K562 (cell line): ENCODE measurements at regions of chr1 and their contacts with region 1.

Region 1: DNA sequence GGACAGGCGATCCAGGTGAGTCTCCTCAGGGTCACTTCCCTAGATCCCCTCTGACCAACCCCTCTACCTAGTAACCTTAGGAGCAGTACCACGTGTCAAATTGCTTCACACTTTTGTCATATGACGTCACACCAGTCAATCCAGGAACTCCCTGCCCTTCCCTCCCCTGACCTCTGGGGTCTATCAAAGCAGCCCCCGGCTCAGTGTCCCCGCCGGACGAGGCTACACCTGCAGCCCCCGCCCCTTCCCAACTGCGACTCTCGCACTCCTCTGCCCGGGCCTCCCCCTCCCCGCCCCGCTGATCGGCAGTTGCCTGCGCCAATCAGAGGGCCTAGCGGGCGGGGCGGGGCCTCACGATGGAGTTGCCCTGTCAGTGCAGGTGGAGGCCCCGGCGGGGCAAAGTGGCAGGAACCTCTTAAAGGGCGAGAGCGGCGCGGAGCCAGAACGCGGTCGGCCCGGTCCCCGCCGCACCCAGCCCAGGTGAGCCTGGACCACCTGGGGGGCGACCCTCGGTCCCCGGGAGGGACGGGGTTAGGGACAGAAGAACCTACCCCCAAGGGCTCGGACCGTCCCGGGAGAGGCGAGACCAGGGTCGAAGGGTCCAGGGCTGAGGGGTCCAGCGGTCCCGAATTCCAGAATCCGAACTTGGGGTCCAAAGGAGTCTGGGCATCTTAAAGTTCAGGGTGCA is 27.5 kb upstream of the EPB41 start:
- DNase-seq: peak; percentile 96 to 100 (median 99)
- ATAC-seq: peak; percentile 74
- H3K4me3 ChIP-seq: peak overlapping the region; percentile 81
- H3K27ac ChIP-seq: peak overlapping the region; percentile 87
- H3K4me1 ChIP-seq: peaks cover 63 to 87% of the 10 kb centered on the region in 2 experiments
- H3K27me3 ChIP-seq: no peaks in the 10 kb centered on the region
- CTCF ChIP-seq: no peak
- EP300 ChIP-seq: no peak
- POLR2A ChIP-seq: peak; percentile 82
- RAD21 ChIP-seq: no peak

Region 2: DNA sequence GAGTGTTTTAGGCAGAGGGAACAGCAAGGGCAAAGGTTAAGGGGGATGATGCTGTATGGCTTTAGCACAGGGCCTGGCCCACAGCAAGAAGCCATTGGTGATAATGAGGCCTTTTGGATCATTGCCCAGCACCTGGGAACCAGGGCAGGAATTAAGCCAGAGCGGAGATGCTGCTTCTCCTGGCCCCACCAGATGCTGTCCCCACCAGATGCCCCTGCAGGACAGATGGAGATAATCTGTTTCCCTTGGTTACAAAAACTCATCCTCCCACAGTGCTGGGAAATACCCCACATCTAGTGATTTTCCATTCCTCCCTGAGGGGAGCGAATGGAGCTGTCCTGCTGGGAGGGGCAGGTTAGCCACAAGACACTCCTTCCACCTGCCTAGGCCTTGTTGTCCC is 56.1 kb before region 1 on chr1:
- CTCF ChIA-PET with region 1: no interaction called
- POLR2A ChIA-PET with region 1: no interaction called
- in situ Hi-C with region 1: no loop called
- intact Hi-C with region 1: no loop called
- DNase-seq: peak in 1 of 4 experiments; percentile 28
- ATAC-seq: peak; percentile 49
- H3K4me3 ChIP-seq: no peak overlapping the region
- H3K27ac ChIP-seq: no peak overlapping the region
- H3K4me1 ChIP-seq: no peaks in the 10 kb centered on the region
- H3K27me3 ChIP-seq: peaks cover 16 to 49% of the 10 kb centered on the region in 2 experiments
- CTCF ChIP-seq: no peak
- EP300 ChIP-seq: no peak
- POLR2A ChIP-seq: no peak
- RAD21 ChIP-seq: no peak

Region 3: DNA sequence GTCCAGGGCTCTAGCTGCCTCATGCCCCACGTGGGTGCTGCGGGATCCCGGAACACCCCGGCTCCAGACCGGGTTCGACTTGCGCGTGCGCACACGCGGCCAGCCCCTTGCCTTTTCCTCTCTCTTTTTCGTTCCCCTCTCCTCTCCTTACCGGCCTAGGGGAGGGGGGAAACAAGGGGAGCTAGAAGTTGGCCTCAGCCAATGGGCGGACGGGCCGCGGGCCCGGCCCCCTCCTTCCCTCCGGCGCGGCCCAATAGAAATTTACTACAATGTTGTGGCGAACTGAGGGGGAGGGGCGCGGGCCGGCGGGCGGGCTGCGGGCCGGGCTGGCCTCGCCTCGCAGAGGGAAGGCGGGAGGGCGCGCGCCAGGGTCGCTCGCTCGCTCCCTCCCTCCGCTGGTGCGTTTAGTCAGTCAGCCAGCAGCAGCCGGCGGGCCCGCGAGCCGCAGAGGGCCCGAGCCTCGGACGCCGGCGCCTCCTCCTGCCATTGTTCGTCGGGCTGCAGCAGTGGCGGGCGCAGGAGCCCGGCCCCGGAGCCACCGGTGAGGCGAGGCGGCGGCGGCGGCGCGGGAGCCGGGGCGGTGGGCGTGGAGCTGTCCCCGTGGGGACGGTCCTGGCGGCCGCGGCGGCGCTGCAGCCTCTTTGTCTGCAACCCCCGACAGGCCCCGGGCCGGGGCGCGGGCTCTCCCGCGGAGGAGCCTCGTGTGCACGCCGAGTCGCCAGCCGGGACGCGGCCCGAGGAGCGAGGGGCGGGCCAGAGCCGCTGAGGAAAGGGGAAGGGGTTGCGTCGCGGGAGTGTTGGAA is 27.6 kb after region 1 on chr1 and contains the start of gene EPB41:
- CTCF ChIA-PET with region 1: no interaction called
- POLR2A ChIA-PET with region 1: interaction called, 10 read pairs
- in situ Hi-C with region 1: no loop called
- intact Hi-C with region 1: loop called (anchors 2 kb)
- DNase-seq: peak; percentile 98 to 99 (median 99)
- ATAC-seq: peak; percentile 94
- H3K4me3 ChIP-seq: peak within 1 kb of the TSS; percentile 59
- H3K27ac ChIP-seq: peak within 1 kb of the TSS; percentile 80
- H3K4me1 ChIP-seq: peaks cover 39 to 42% of the 10 kb centered on the region in 2 experiments
- H3K27me3 ChIP-seq: no peaks in the 10 kb centered on the region
- CTCF ChIP-seq: no peak
- EP300 ChIP-seq: no peak
- POLR2A ChIP-seq: no peak; the same call in 1 of the 2 replicates
- RAD21 ChIP-seq: peak in 1 of 2 experiments; percentile 4; a peak in 1 of 4 replicates
- polyA plus RNA-seq, gene EPB41: 3.7 to 7.0 TPM

Region 4: DNA sequence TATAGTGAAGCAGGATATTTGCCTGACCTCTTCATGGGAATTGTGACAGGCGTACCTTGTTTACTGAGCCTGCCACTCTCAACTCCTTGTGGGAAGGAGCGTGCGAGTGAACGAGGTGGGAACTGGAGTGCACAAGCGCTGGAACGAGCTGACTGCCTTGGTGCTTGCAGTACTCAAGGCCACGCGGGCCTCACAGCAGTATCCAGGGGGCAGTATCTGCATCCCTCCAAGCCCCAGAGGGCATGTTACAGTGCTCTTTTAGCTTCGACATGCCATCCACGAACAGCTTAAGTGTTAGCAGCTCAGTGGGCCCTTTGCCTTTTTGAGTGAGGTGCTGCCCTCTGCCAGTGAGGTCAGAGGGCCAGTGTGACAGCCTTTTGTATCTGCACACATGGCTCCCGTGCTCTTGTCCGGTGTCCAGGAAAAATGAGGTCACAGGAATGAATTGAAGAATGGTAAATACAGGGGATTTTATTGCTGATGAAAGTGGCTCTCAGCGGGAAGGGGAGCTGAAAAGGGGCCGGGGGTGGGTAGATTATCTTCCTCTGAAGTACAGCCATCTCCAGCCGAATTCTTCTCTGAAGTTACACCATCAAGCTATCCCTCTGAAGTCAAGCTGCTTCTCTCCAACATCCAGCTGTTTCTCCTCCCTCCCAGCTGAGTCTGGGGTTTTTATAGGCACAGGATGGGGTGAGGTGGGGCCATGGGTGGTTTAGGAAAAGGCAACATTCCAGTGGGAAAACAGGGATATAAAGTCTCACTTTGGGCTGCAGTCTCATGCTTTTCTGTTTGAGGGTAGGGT is 96.8 kb after region 1 on chr1:
- CTCF ChIA-PET with region 1: no interaction called
- POLR2A ChIA-PET with region 1: no interaction called
- in situ Hi-C with region 1: no loop called
- intact Hi-C with region 1: loop called (anchors 5 kb)
- DNase-seq: no peak
- ATAC-seq: peak; percentile 52
- H3K4me3 ChIP-seq: no peak overlapping the region
- H3K27ac ChIP-seq: no peak overlapping the region
- H3K4me1 ChIP-seq: peaks cover 4 to 5% of the 10 kb centered on the region in 2 experiments; a peak in 4 of 5 replicates
- H3K27me3 ChIP-seq: no peaks in the 10 kb centered on the region
- CTCF ChIP-seq: peak in 2 of 3 experiments; percentile 8 to 22; a peak in 2 of 6 replicates
- EP300 ChIP-seq: no peak
- POLR2A ChIP-seq: no peak
- RAD21 ChIP-seq: no peak

Region 5: DNA sequence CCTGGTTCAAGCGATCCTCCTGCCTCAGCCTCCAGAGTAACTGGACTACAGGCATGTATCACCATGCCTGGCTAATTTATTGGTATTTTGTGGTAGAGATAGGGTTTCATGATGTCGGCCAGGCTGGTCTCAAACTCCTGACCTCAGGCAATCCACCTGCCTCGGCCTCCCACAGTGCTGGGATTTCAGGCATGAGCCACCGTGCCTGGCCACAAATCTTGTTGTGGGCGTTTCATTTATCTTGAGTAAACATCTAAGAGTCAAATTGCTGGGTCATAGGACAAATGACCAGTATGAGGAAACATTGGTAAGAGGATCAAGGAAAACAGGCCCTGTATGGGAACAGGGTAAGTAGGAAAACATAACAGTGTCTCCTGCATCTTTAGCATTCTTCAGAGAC is 219.0 kb after region 1 on chr1:
- CTCF ChIA-PET with region 1: no interaction called
- POLR2A ChIA-PET with region 1: no interaction called
- in situ Hi-C with region 1: no loop called
- intact Hi-C with region 1: no loop called
- DNase-seq: no peak
- ATAC-seq: peak; percentile 59
- H3K4me3 ChIP-seq: no peak overlapping the region
- H3K27ac ChIP-seq: no peak overlapping the region
- H3K4me1 ChIP-seq: no peaks in the 10 kb centered on the region
- H3K27me3 ChIP-seq: no peaks in the 10 kb centered on the region
- CTCF ChIP-seq: no peak
- EP300 ChIP-seq: no peak
- POLR2A ChIP-seq: no peak
- RAD21 ChIP-seq: no peak

Region 6: DNA sequence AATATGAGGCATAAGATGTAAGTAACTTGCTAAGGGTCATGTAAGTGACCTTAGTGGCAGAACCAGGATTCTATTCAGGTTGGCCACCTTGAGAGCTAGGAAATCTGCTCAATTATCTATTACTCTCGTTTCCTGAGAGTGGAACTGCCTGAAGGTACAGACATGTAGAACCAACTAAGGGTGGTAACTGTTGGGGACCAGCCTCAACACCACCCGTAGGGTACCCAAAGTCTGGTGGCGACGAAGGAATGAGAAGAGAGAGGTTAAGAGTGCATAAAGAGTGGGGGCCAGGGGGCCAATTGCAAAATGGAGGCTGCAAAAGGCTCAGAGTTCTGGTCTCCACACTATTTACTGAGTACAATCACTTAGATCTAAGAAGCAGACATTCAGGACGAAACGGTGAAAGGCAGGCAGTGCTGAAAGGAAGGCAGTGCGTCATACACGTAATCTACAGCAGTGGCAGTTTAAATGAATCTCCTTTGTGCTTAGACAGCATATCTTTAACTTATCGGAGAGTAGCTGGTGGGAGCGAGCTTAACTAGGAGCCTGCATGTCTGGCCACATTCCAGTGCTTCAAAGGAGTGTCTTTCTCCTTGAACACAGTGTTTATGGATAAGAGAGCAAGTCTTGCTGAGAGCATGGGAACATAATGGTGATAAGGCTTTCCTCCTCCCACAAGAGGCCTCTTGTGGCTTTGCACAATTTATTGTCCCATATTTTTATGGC is 269.8 kb after region 1 on chr1:
- CTCF ChIA-PET with region 1: no interaction called
- POLR2A ChIA-PET with region 1: interaction called, 7 read pairs
- in situ Hi-C with region 1: no loop called
- intact Hi-C with region 1: loop called (anchors 1 kb)
- DNase-seq: peak; percentile 59 to 97 (median 70)
- ATAC-seq: peak; percentile 93
- H3K4me3 ChIP-seq: peak overlapping the region; percentile 8; the same call in 1 of the 2 replicates
- H3K27ac ChIP-seq: peak overlapping the region; percentile 90
- H3K4me1 ChIP-seq: peaks cover 30 to 34% of the 10 kb centered on the region in 2 experiments
- H3K27me3 ChIP-seq: no peaks in the 10 kb centered on the region
- CTCF ChIP-seq: 0 out of 6 replicates have a peak, but pooled peaks of 1 of the 3 experiments have one; percentile 4
- EP300 ChIP-seq: peak; percentile 98
- POLR2A ChIP-seq: peak; percentile 50
- RAD21 ChIP-seq: peak in 1 of 2 experiments; percentile 33; a peak in 2 of 4 replicates

Region 7: DNA sequence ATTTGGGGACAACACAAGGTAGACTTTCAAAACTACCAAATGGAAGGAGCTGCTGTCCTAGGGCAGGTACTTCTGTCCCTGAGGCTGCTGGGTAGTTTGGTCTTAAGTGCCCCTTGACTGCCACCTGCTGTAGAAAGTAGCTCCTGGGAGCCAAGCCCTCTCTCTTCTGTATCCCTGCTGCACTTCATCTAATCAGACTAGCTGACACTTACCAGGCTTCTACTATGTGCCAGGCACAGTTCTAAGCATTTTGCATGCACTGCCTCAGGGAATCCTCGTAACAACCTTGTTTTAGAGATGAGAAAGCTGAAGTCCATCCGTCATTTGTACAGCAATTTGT is 310.7 kb after region 1 on chr1:
- CTCF ChIA-PET with region 1: interaction called, 35 read pairs
- POLR2A ChIA-PET with region 1: interaction called, 17 read pairs
- in situ Hi-C with region 1: loop called (anchors 5 kb)
- intact Hi-C with region 1: loop called (anchors 1 kb)
- DNase-seq: peak; percentile 44 to 71 (median 53)
- ATAC-seq: peak; percentile 94
- H3K4me3 ChIP-seq: no peak overlapping the region
- H3K27ac ChIP-seq: no peak overlapping the region
- H3K4me1 ChIP-seq: peaks cover 17 to 18% of the 10 kb centered on the region in 2 experiments
- H3K27me3 ChIP-seq: no peaks in the 10 kb centered on the region
- CTCF ChIP-seq: peak; percentile 65 to 79 (median 75)
- EP300 ChIP-seq: no peak
- POLR2A ChIP-seq: no peak
- RAD21 ChIP-seq: peak; percentile 61 to 83; a peak in 3 of 4 replicates